ENCODE measurements at regions of chr1 and their contacts with region 1.

Region 1: DNA sequence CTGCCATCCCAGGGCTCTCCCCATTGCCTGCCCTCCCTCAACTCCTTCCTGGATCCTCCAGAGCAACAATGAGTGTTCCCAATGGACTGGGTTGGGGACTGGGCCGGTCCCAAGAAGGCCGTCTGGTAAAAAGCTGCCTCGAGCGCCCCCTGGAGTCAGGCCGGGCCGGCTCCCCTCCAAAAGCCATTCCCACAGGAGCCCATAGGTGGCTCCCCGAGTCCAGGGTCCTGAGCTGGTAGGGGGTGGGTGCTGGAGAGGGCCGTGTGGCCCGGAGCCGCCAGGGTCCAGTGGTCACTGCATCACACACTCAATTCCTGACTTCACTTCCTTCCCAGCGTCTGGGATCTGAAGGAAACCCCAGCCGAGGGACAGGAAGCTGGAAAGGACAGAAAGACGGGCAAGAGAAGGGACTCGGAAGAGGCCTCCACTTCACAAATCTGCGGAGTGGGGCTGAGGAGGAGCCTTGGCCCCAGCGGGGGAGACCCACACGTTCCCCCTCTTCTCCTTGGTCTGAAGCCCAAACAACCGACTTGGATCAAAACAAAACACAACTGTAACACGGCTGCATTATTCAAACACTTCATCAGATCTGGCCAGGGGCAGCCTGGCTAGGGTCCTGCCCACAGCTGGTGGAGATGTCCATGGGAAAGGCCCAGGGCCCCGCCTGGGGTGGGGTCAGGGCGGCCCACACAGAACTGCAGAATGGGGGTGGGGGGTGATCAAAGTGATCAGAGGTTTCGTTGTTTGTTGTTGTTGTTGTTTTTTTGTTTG is 10.9 kb upstream of the ALDH4A1 start:
- DNase-seq: peak; percentile 81
- H3K4me3 Mint-ChIP-seq: no peak overlapping the region
- H3K27ac Mint-ChIP-seq: no peak overlapping the region
- H3K4me1 Mint-ChIP-seq: peaks cover 6% of the 10 kb centered on the region
- H3K27me3 Mint-ChIP-seq: no peaks in the 10 kb centered on the region

Region 2: GRCh38 chr1:18828224-18828623 is 85.0 kb before region 1 on chr1:
- CTCF ChIA-PET with region 1: no interaction called
- DNase-seq: no peak
- H3K4me3 Mint-ChIP-seq: no peak overlapping the region
- H3K27ac Mint-ChIP-seq: no peak overlapping the region
- H3K4me1 Mint-ChIP-seq: no peaks in the 10 kb centered on the region
- H3K27me3 Mint-ChIP-seq: peaks cover 9% of the 10 kb centered on the region

Region 3: GRCh38 chr1:18902523-18903290 is 10.5 kb before region 1 on chr1 and contains the start of gene ALDH4A1:
- CTCF ChIA-PET with region 1: interaction called, 16 read pairs
- DNase-seq: peak; percentile 97
- H3K4me3 Mint-ChIP-seq: peak within 1 kb of the TSS; percentile 95
- H3K27ac Mint-ChIP-seq: peak within 1 kb of the TSS; percentile 95
- H3K4me1 Mint-ChIP-seq: peaks cover 45% of the 10 kb centered on the region
- H3K27me3 Mint-ChIP-seq: no peaks in the 10 kb centered on the region

Region 4: DNA sequence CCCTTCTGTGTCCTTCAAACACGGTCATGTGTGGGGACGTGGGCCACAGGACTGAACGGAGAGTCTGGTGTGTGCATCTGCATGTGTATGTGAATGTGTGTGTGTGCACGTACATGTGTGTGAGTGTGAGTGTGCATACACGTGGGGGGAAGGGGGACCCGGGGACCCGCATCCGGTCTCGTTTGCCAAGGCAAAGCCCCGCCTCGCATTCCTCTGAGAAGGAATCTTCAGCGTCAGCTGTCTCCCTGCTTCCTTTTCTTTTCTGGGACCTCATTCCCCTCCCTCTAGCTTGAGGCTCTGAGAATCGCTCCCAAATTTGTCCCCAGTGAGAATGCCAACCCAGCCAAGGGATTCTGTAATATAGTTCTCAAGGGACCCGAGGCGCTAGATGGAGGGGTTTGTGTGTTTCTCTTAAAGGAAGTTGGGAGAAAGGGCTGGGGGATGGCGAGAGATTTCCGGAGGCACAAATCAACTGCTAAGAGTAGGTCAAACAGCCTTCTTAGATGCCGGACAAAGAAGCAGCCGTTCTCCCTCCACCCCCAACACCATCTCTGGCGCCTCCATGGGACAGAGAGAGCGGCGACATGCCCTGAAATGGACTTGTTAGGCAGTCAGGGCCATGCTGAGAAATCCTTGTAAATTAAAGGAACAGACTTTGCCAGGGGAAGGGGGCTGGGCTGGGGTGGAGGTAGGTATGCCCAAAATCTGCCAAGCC is 36.6 kb after region 1 on chr1:
- CTCF ChIA-PET with region 1: interaction called, 27 read pairs
- DNase-seq: peak; percentile 41
- H3K4me3 Mint-ChIP-seq: peak overlapping the region; percentile 77
- H3K27ac Mint-ChIP-seq: peak overlapping the region; percentile 93
- H3K4me1 Mint-ChIP-seq: peaks cover 96% of the 10 kb centered on the region
- H3K27me3 Mint-ChIP-seq: peaks cover 19% of the 10 kb centered on the region

Region 5: DNA sequence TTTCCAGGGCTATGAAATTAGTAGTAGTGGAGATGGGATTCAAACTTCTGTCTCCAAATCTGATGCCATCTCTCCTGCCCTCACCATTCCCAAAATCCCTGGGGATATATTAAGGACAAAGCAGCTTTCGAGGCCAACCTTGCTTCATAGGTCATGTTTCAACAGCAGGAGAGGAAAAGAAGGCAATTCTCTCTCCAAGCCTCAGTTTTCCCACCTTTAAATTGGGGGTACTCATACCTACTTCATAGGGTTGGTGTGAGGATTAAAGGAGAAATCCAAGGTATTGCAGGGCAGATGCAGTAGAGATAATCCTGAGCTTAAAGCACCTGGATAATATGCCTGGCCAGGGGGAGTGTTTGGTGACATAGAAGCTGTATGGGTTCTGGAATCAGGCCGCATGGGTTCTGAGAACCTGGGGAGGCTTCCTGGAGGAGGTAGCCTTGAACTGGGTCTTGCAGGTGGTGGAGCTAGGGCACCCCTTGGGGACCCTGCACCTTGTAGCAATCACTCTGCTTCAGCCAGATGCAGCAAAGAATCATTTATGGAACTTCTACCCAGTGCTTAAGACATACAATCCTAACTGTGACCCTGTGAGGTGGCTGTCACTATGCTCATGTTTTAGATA is 53.9 kb after region 1 on chr1:
- CTCF ChIA-PET with region 1: interaction called, 23 read pairs
- DNase-seq: no peak
- H3K4me3 Mint-ChIP-seq: no peak overlapping the region
- H3K27ac Mint-ChIP-seq: no peak overlapping the region
- H3K4me1 Mint-ChIP-seq: no peaks in the 10 kb centered on the region
- H3K27me3 Mint-ChIP-seq: peaks cover 45% of the 10 kb centered on the region

Region 6: DNA sequence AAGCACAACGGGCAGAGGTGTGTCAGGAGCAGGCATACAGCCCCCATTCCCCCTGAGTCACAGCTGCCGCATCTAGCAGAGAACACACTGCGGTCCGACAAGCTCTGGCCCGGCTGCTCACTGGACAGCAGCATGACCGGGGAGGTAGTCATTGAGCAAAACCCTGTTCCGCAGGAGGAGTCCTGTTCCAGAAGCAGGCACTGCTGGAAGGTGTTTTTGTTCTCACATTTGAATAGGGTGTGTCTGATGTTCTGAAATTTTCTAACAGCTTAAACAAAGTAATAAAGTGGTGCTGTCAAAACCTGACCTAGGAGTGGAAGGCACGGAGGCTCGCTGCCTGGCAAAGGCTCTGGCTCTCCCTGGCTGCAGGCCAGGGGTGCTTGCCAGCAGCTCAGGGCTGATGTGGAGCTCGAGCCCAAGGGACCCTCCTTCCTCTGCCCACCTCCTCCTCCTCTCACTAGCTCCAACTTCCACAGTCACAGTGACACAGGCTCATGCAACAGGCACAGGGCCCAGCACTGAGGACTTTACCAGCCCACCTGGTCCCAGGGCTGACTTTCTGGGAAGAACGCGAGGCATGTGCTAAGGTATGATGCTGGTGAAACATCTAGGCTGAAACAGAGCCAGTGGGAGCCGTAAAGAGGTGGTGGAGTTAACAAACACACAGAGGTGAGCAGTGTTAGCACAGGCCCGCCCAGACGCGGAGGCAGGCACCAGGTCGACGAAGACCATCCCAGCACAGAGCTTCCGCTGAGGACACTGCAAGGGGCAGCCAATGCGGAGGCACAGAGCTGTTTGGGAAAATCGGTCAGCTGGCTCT is 161.9 kb after region 1 on chr1:
- CTCF ChIA-PET with region 1: interaction called, 24 read pairs
- DNase-seq: no peak
- H3K4me3 Mint-ChIP-seq: peak overlapping the region; percentile 2
- H3K27ac Mint-ChIP-seq: peak overlapping the region; percentile 88
- H3K4me1 Mint-ChIP-seq: peaks cover 37% of the 10 kb centered on the region
- H3K27me3 Mint-ChIP-seq: peaks cover 19% of the 10 kb centered on the region

Region 7: GRCh38 chr1:19113697-19114092 is 200.4 kb after region 1 on chr1:
- CTCF ChIA-PET with region 1: interaction called, 37 read pairs
- DNase-seq: peak; percentile 72
- H3K4me3 Mint-ChIP-seq: no peak overlapping the region
- H3K27ac Mint-ChIP-seq: no peak overlapping the region
- H3K4me1 Mint-ChIP-seq: no peaks in the 10 kb centered on the region
- H3K27me3 Mint-ChIP-seq: no peaks in the 10 kb centered on the region

Measured in activated naive CD4-positive, alpha-beta T cell treated with anti-CD3 and anti-CD28 coated beads, Interleukin-2, amount 10 ng/mL, durations not matched to agents 7 days and 5 days (primary cell).